ENCODE measurements at regions of chr12 and their contacts with region 1.

Region 1: GRCh38 chr12:56189176-56189917 is at the start of gene SMARCC2:
- DNase-seq: peak; percentile 90
- ATAC-seq: peak; percentile 90
- H3K4me3 Mint-ChIP-seq: peak within 1 kb of the TSS; percentile 93
- H3K27ac Mint-ChIP-seq: peak within 1 kb of the TSS; percentile 93
- H3K4me1 Mint-ChIP-seq: peaks cover 52% of the 10 kb centered on the region
- H3K27me3 Mint-ChIP-seq: no peaks in the 10 kb centered on the region
- total RNA-seq, gene SMARCC2: 144 to 154 TPM

Region 2: DNA sequence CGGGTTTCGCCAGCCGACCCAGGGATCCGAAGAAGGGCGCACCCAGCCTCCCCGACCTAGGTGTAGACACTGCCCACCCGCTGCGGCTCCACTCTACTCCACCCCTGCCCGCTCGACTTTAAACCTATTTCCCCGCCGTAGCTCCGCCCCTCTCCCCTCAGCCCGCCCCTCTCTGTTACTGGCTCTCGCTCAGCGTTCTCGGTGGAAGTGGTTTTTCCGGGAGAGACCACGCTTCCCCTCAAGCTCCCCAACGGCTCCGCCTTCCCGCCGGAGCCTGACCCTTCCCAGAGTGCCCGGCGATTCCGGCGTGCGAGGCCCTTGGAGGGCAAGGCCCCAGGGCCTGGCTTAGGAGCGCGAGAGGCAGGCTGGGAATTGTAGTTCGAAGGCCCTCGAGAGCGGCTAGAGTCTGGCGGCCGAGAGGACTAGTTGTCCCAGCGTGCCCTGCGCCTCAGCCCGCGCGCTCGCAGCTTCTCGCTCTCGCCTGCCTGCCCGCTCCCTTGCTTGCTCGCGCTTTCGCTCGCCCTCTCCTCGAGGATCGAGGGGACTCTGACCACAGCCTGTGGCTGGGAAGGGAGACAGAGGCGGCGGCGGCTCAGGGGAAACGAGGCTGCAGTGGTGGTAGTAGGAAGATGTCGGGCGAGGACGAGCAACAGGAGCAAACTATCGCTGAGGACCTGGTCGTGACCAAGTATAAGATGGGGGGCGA is 85.1 kb before region 1 on chr12 and contains the start of gene PA2G4:
- CTCF ChIA-PET with region 1: interaction called, 8 read pairs
- POLR2A ChIA-PET with region 1: interaction called, 19 read pairs
- DNase-seq: peak; percentile 99
- ATAC-seq: peak; percentile 94
- H3K4me3 Mint-ChIP-seq: peak within 1 kb of the TSS; percentile 100
- H3K27ac Mint-ChIP-seq: peak within 1 kb of the TSS; percentile 98
- H3K4me1 Mint-ChIP-seq: peaks cover 64% of the 10 kb centered on the region
- H3K27me3 Mint-ChIP-seq: no peaks in the 10 kb centered on the region
- total RNA-seq, gene PA2G4: 316 to 323 TPM

Region 3: DNA sequence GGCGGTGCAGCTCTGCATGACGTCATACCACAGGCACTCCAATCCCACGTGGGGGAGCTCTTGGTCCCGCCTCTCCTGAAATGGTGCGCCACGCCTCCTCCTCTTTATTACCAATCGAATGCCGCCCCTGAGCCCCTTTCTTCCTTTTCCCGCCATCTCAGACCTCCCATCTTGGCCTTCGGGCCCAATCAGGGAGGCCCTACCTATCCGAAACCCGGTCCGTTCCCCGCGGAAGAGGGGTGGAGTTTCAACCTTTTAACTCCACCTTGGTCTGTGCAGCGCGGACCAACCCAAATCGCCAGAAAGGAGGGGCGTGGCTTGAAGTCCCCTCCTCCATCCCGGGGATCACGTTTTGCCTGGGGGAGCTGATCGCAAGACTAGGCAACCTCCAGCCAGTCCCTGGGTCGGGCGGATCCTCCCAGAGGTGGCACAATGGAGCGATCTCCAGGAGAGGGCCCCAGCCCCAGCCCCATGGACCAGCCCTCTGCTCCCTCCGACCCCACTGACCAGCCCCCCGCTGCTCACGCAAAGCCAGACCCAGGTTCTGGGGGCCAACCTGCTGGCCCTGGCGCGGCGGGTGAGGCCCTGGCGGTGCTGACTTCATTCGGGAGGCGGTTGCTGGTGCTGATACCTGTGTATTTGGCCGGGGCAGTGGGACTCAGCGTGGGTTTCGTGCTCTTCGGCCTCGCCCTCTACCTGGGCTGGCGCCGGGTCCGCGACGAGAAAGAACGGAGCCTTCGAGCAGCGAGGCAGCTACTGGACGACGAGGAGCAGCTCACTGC is 61.3 kb before region 1 on chr12 and contains the start of gene ESYT1:
- CTCF ChIA-PET with region 1: interaction called, 148 read pairs
- POLR2A ChIA-PET with region 1: interaction called, 20 read pairs
- DNase-seq: peak; percentile 100
- ATAC-seq: peak; percentile 91
- H3K4me3 Mint-ChIP-seq: peak within 1 kb of the TSS; percentile 88
- H3K27ac Mint-ChIP-seq: peak within 1 kb of the TSS; percentile 91
- H3K4me1 Mint-ChIP-seq: peaks cover 70% of the 10 kb centered on the region
- H3K27me3 Mint-ChIP-seq: no peaks in the 10 kb centered on the region
- total RNA-seq, gene ESYT1: 317 to 333 TPM

Region 4: DNA sequence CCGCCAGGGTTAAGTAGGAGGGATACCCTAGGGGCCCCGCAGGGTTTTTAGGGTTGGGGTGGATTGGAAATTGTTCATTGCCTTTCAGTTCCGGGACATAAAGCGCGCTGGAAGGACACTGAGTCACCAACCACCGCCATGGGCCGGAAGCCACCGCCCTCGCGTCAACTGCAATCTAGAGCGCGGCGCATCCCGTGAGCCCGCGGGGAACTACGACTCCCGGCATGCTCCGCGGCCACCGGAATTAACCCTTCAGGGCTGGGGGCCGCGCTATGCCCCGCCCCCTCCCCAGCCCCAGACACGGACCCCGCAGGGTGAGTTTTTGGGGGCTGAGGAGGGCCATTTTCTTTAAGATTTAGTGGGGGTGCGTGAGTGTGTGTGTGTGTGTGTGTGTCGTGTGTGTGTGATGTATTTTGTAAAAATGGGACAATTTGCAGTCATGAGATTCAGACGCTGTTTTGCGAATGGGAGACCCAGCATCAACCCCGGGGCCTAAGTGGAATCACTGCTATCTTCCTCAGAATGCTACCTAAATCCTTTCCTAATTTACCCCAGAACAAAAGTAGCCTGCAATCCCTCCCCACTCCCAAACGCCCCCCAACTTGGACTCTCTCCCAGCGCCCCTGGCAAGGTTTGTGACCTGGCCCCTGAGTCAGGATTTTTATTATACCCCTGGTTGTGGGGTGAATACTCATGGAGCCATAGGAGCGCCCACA is 36.9 kb before region 1 on chr12 and contains the start of gene MYL6B:
- CTCF ChIA-PET with region 1: interaction called, 12 read pairs
- POLR2A ChIA-PET with region 1: interaction called, 7 read pairs
- DNase-seq: peak; percentile 97
- ATAC-seq: peak; percentile 91
- H3K4me3 Mint-ChIP-seq: peak within 1 kb of the TSS; percentile 92
- H3K27ac Mint-ChIP-seq: peak within 1 kb of the TSS; percentile 99
- H3K4me1 Mint-ChIP-seq: peaks cover 60% of the 10 kb centered on the region
- H3K27me3 Mint-ChIP-seq: no peaks in the 10 kb centered on the region
- total RNA-seq, gene MYL6B: 60.0 to 60.7 TPM

Region 5: GRCh38 chr12:56178347-56178746 is 11.0 kb before region 1 on chr12:
- CTCF ChIA-PET with region 1: interaction called, 14 read pairs
- POLR2A ChIA-PET with region 1: interaction called, 3 read pairs
- DNase-seq: no peak
- ATAC-seq: no peak
- H3K4me3 Mint-ChIP-seq: no peak overlapping the region
- H3K27ac Mint-ChIP-seq: no peak overlapping the region
- H3K4me1 Mint-ChIP-seq: no peaks in the 10 kb centered on the region
- H3K27me3 Mint-ChIP-seq: no peaks in the 10 kb centered on the region

Region 6: GRCh38 chr12:56224102-56224701 is 34.9 kb after region 1 on chr12 and contains the start of gene NABP2:
- CTCF ChIA-PET with region 1: interaction called, 69 read pairs
- POLR2A ChIA-PET with region 1: interaction called, 24 read pairs
- DNase-seq: peak; percentile 96
- ATAC-seq: peak; percentile 87
- H3K4me3 Mint-ChIP-seq: peak within 1 kb of the TSS; percentile 91
- H3K27ac Mint-ChIP-seq: peak within 1 kb of the TSS; percentile 85
- H3K4me1 Mint-ChIP-seq: peaks cover 54% of the 10 kb centered on the region
- H3K27me3 Mint-ChIP-seq: no peaks in the 10 kb centered on the region
- total RNA-seq, gene NABP2: 64.3 to 69.5 TPM

Region 7: GRCh38 chr12:56315622-56316473 is 126.5 kb after region 1 on chr12 and contains the start of gene CNPY2:
- CTCF ChIA-PET with region 1: interaction called, 13 read pairs
- POLR2A ChIA-PET with region 1: interaction called, 4 read pairs
- DNase-seq: peak; percentile 98
- ATAC-seq: peak; percentile 96
- H3K4me3 Mint-ChIP-seq: peak within 1 kb of the TSS; percentile 99
- H3K27ac Mint-ChIP-seq: peak within 1 kb of the TSS; percentile 98
- H3K4me1 Mint-ChIP-seq: peaks cover 16% of the 10 kb centered on the region
- H3K27me3 Mint-ChIP-seq: no peaks in the 10 kb centered on the region
- total RNA-seq, gene CNPY2: 112 to 113 TPM

Region 8: GRCh38 chr12:56581418-56582145 is 392.2 kb after region 1 on chr12:
- CTCF ChIA-PET with region 1: no interaction called
- POLR2A ChIA-PET with region 1: no interaction called
- DNase-seq: peak; percentile 72
- ATAC-seq: peak; percentile 91
- H3K4me3 Mint-ChIP-seq: peak overlapping the region; percentile 53
- H3K27ac Mint-ChIP-seq: peak overlapping the region; percentile 86
- H3K4me1 Mint-ChIP-seq: peaks cover 34% of the 10 kb centered on the region
- H3K27me3 Mint-ChIP-seq: no peaks in the 10 kb centered on the region

Measured in activated CD8-positive, alpha-beta T cell treated with anti-CD3 and anti-CD28 coated beads, Interleukin-2, amount 10 ng/mL, durations not matched to agents 7 days and 5 days (primary cell).